ENCODE measurements at regions of chr1 and their contacts with region 1.

Region 1: GRCh38 chr1:16078925-16079656 is 5.6 kb upstream of the FAM131C start:
- DNase-seq: peak in 2 of 3 donors; percentile 74 to 76
- ATAC-seq: peak; percentile 73 to 82 (median 80)
- H3K4me3 ChIP-seq: no peak overlapping the region
- H3K27ac ChIP-seq: no peak overlapping the region
- H3K4me1 ChIP-seq: peaks cover 0 to 14% (median 0%) of the 10 kb centered on the region in 4 donors
- H3K27me3 ChIP-seq: no peaks in the 10 kb centered on the region
- CTCF ChIP-seq: peak; percentile 84 to 93 (median 90)
- POLR2A ChIP-seq: no peak

Region 2: DNA sequence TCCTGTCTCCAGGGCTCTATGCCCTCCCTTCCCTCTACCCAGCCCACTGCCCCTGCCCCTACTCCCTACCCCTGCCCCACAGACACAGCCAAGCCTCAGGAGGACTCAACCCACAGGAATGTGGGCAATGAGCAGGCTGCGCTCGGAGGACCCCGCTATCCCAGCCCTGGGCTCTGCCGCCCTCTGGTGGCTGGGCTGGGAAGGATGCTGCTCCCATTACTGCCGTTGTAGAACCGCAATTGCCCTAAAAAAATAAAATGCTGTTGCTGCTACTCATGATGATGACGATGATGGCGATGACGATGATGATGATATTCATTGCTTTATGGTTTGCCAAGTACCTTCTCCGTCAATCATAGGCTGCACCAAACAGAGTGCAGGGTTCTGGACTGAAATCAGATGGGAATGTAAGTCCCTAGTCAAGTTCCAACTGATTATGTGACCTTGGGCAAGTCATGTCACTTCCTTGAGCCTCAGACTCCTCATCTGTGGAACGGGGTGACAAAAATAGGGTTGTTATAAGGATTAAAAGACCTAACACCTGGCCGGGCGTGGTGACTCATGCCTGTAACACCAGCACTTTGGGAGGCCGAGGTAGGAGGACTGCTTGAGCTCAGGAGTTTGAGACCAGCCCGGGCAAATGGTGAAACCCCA is 108.8 kb after region 1 on chr1:
- intact Hi-C with region 1: loop called (anchors 2 to 5 kb)
- DNase-seq: peak; percentile 72 to 80 (median 75)
- ATAC-seq: peak; percentile 44 to 74 (median 63)
- H3K4me3 ChIP-seq: no peak overlapping the region
- H3K27ac ChIP-seq: no peak overlapping the region
- H3K4me1 ChIP-seq: peaks cover 0 to 60% (median 6%) of the 10 kb centered on the region in 4 donors
- H3K27me3 ChIP-seq: no peaks in the 10 kb centered on the region
- CTCF ChIP-seq: peak; percentile 85 to 95 (median 93)
- POLR2A ChIP-seq: no peak

Region 3: GRCh38 chr1:16243936-16244649 is 165.0 kb after region 1 on chr1:
- intact Hi-C with region 1: loop called in 1 of 2 experiments (anchors 10 kb)
- DNase-seq: peak; percentile 54 to 73 (median 72)
- ATAC-seq: peak; percentile 68 to 77 (median 74)
- H3K4me3 ChIP-seq: no peak overlapping the region
- H3K27ac ChIP-seq: no peak overlapping the region
- H3K4me1 ChIP-seq: peaks cover 0 to 18% (median 4%) of the 10 kb centered on the region in 4 donors
- H3K27me3 ChIP-seq: no peaks in the 10 kb centered on the region
- CTCF ChIP-seq: peak; percentile 86 to 90 (median 87)
- POLR2A ChIP-seq: no peak

Region 4: GRCh38 chr1:16366722-16367257 is 287.7 kb after region 1 on chr1 and contains the start of gene SZRD1:
- intact Hi-C with region 1: loop called in 1 of 2 experiments (anchors 10 kb)
- DNase-seq: peak; percentile 96 to 98 (median 97)
- ATAC-seq: peak; percentile 87 to 92 (median 91)
- H3K4me3 ChIP-seq: peak within 1 kb of the TSS; percentile 88 to 96 (median 92)
- H3K27ac ChIP-seq: peak within 1 kb of the TSS; percentile 94 to 96 (median 94)
- H3K4me1 ChIP-seq: peaks cover 0 to 16% (median 4%) of the 10 kb centered on the region in 4 donors
- H3K27me3 ChIP-seq: no peaks in the 10 kb centered on the region
- CTCF ChIP-seq: no peak
- POLR2A ChIP-seq: no peak
- total RNA-seq, gene SZRD1: 41.4 to 57.8 (median 47.5) TPM

Measured in right lobe of liver (tissue), 6 donors.